CD4-positive, alpha-beta memory T cell (primary cell): ENCODE measurements at regions of chr12 and their contacts with region 1.

Region 1: GRCh38 chr12:6341417-6342139 is at the start of gene TNFRSF1A:
- DNase-seq: peak; percentile 44 to 66 (median 56)
- H3K4me3 ChIP-seq: peak within 1 kb of the TSS; percentile 87 to 97
- H3K4me3 Mint-ChIP-seq: no peak within 1 kb of the TSS
- H3K27ac ChIP-seq: peak within 1 kb of the TSS; percentile 92
- H3K27ac Mint-ChIP-seq: peak within 1 kb of the TSS in 2 of 7 donors; percentile 87 to 97
- H3K4me1 ChIP-seq: peaks cover 74% of the 10 kb centered on the region
- H3K4me1 Mint-ChIP-seq: peaks cover 28 to 40% (median 35%) of the 10 kb centered on the region in 4 donors
- H3K27me3 ChIP-seq: no peaks in the 10 kb centered on the region
- H3K27me3 Mint-ChIP-seq: no peaks in the 10 kb centered on the region
- total RNA-seq, gene TNFRSF1A: 80.7 to 86.7 TPM

Region 2: DNA sequence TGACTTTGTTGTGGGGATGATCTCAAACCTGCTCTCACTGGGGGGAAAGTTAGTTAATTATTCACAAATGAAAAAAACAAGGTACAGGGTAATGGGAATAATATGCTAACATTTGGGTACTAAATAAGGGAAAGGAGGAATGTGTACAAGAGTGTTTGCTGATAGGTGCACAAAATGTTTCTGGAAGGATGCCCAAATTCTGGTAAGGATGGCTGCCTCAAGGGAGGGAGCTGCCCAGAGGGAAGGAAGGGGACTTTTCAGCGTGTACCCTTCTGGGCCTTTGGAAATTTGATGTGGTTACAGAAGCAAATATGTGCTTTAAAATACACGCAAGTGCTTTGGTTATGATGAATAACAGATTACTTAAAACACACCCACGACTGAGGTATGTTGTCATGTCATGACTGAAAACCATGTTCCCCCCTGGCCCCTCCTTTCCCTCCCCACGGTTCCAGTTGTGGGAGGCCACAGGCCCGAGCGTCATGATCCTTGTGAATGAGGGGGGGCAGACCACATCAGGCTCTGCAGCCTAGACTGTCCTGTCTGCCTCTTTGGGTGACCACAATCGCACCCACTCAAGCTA is 74.3 kb before region 1 on chr12:
- CTCF ChIA-PET with region 1: no interaction called
- POLR2A ChIA-PET with region 1: no interaction called
- intact Hi-C with region 1: no loop called
- DNase-seq: no peak
- H3K4me3 ChIP-seq: no peak overlapping the region
- H3K4me3 Mint-ChIP-seq: no peak overlapping the region
- H3K27ac ChIP-seq: no peak overlapping the region
- H3K27ac Mint-ChIP-seq: no peak overlapping the region
- H3K4me1 ChIP-seq: no peaks in the 10 kb centered on the region
- H3K4me1 Mint-ChIP-seq: peaks cover 0 to 1% (median 0%) of the 10 kb centered on the region in 4 donors
- H3K27me3 ChIP-seq: no peaks in the 10 kb centered on the region
- H3K27me3 Mint-ChIP-seq: peaks cover 7 to 10% of the 10 kb centered on the region in 2 donors

Region 3: DNA sequence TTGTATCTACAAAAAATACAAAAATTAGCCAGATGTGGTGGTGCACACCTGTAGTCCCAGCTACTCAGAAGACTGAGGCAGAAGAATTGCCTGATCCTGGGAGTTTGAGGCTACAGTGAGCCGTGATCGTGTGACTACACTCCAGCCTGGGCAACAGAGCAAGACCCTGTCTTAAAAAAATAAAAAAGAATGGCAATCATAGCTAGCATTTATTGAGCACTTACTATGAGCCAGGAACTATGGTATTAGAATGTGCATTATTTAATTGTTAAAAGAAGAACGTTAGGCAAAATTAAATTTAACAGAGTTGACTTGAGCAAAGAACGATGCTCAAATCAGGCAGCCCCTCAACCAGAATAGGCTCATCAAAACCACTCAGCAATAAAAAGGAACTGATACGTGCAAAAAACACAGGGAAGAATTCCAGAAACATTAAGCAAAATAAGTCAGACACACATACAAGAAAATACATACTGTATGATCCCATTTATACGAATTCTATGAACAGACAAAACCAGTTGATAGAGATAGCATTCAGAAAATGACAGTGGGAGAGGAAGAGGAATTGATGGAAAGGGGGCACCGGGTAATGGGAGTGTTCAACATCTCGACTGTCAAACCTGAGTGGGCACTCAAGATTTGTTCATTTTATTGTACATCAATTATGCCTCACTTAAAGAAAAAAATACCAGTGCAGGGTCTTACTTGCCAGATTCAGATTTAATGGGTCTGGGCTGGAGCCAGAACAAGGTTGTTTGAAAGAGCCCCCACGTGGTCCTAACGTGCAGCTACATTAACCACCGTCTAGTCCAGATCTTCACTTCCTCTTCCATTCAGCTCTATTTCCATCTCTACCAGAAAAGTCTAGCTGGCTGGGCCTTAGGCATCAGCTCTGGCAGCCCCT is 25.7 kb after region 1 on chr12:
- CTCF ChIA-PET with region 1: interaction called, 268 read pairs
- POLR2A ChIA-PET with region 1: interaction called, 250 read pairs
- intact Hi-C with region 1: no loop called
- DNase-seq: peak; percentile 36 to 55 (median 48)
- H3K4me3 ChIP-seq: no peak overlapping the region
- H3K4me3 Mint-ChIP-seq: peak overlapping the region in 1 of 8 donors; percentile 5
- H3K27ac ChIP-seq: no peak overlapping the region
- H3K27ac Mint-ChIP-seq: peak overlapping the region in 5 of 7 donors; percentile 30 to 84 (median 79)
- H3K4me1 ChIP-seq: peaks cover 26% of the 10 kb centered on the region
- H3K4me1 Mint-ChIP-seq: peaks cover 8 to 38% (median 13%) of the 10 kb centered on the region in 4 donors
- H3K27me3 ChIP-seq: no peaks in the 10 kb centered on the region
- H3K27me3 Mint-ChIP-seq: no peaks in the 10 kb centered on the region

Region 4: GRCh38 chr12:6443361-6443983 is 101.9 kb after region 1 on chr12:
- CTCF ChIA-PET with region 1: no interaction called
- POLR2A ChIA-PET with region 1: interaction called, 12 read pairs
- intact Hi-C with region 1: no loop called
- DNase-seq: no peak
- H3K4me3 ChIP-seq: no peak overlapping the region
- H3K4me3 Mint-ChIP-seq: peak overlapping the region; percentile 83 to 99 (median 96)
- H3K27ac ChIP-seq: peak overlapping the region; percentile 41
- H3K27ac Mint-ChIP-seq: peak overlapping the region; percentile 80 to 99 (median 92)
- H3K4me1 ChIP-seq: peaks cover 37% of the 10 kb centered on the region
- H3K4me1 Mint-ChIP-seq: peaks cover 28 to 64% (median 40%) of the 10 kb centered on the region in 4 donors
- H3K27me3 ChIP-seq: no peaks in the 10 kb centered on the region
- H3K27me3 Mint-ChIP-seq: no peaks in the 10 kb centered on the region

Region 5: DNA sequence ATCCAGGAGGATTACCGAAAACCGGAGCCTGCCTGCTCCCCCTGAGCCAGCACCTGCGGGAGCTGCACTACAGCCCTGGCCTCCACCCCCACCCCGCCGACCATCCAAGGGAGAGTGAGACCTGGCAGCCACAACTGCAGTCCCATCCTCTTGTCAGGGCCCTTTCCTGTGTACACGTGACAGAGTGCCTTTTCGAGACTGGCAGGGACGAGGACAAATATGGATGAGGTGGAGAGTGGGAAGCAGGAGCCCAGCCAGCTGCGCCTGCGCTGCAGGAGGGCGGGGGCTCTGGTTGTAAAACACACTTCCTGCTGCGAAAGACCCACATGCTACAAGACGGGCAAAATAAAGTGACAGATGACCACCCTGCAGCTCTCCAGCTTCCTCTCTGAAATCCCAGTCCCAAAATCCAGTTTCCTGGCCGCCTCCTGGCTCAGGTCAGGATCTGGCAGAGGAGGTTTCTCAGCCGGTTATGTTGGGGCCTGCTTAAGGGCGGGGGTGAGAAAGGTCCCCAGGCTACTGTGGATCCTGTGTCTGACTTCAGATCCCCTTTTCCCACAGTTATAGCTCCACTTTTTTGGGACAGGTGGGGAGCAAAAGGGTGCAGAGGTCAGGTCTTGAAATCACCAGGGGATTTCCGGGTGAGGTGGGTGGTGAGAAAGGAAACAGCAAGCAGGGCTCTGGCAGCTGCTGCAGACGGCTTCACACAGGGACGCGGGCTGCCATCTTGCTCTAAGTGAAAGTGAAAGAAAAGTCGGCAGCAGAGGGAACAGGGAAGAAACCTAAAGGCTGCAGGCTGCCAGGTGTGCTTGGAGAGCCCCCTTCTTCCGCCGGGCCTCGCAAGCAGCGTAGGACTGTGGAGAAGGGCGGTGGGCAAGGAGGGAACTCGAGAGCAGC is 110.0 kb after region 1 on chr12 and contains the start of gene TAPBPL:
- CTCF ChIA-PET with region 1: interaction called, 5 read pairs
- POLR2A ChIA-PET with region 1: interaction called, 33 read pairs
- intact Hi-C with region 1: no loop called
- DNase-seq: peak; percentile 85 to 94 (median 86)
- H3K4me3 ChIP-seq: peak within 1 kb of the TSS; percentile 80
- H3K4me3 Mint-ChIP-seq: peak within 1 kb of the TSS; percentile 96 to 100 (median 98)
- H3K27ac ChIP-seq: peak within 1 kb of the TSS; percentile 99
- H3K27ac Mint-ChIP-seq: peak within 1 kb of the TSS; percentile 95 to 99 (median 99)
- H3K4me1 ChIP-seq: peaks cover 68% of the 10 kb centered on the region
- H3K4me1 Mint-ChIP-seq: peaks cover 45 to 79% (median 64%) of the 10 kb centered on the region in 4 donors
- H3K27me3 ChIP-seq: no peaks in the 10 kb centered on the region
- H3K27me3 Mint-ChIP-seq: no peaks in the 10 kb centered on the region
- total RNA-seq, gene TAPBPL: 66.4 to 66.9 TPM